PC-9 (cell line): ENCODE measurements at regions of chrX and their contacts with region 1.

Region 1: DNA sequence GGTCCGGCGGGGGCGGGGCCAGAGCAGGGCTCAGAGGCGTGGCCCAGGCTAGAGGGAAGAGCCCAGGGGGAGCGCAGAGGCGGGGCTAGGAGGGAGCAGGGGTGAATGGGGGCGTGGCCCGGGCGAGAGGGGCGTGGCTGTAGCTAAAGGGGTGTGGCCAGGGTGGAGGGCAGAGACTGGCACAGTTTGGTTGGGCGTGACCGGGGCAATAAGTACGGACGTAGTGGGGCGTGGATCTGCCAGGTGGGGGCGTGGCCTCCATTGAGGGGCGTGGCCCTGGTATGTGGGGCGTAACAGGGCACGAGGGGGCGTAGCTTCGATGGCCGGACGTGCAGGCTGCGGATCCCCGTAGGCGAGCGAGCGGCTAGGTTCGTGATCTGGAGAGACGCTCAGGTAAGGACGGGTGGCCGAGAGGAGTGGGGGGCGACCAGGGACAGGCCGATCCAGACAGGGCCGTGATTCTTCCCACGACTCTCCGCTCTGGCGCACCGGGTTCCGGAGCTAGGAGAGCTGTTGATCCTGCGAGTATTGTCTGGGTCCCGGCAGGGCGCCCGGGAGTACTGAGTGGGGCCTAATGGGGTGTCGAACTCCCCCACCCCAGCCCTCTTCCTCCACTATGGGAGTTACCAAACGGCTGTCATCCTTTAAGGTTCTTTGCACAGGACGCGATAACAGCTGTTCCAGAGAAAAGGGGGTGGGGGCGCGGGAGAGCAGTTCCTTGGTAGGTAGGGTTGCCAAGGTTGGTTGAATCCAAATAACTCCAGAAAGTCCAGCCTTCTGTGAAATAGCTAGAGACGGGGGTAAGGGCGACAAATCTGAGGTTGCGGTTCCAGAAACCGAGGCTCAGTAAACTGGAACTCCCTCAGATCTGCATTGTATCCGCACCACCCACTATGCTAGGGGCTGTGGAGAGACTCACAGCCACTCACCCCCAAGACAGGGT is at the start of gene CA5B:
- DNase-seq: peak; percentile 82 to 99
- H3K4me3 ChIP-seq: peak within 1 kb of the TSS; percentile 58
- H3K27ac ChIP-seq: peak within 1 kb of the TSS; percentile 82
- H3K4me1 ChIP-seq: peaks cover 12% of the 10 kb centered on the region
- H3K27me3 ChIP-seq: no peaks in the 10 kb centered on the region
- CTCF ChIP-seq: no peak
- total RNA-seq, gene CA5B: 10.9 and 12.1 TPM in 2 replicates

Region 2: GRCh38 chrX:15335135-15336022 is 402.9 kb before region 1 on chrX and contains the start of gene PIGA:
- CTCF ChIA-PET with region 1: no interaction called
- POLR2A ChIA-PET with region 1: no interaction called
- intact Hi-C with region 1: loop called (anchors 1 kb)
- DNase-seq: peak; percentile 94 to 95
- H3K4me3 ChIP-seq: peak within 1 kb of the TSS; percentile 82
- H3K27ac ChIP-seq: peak within 1 kb of the TSS; percentile 89
- H3K4me1 ChIP-seq: peaks cover 13% of the 10 kb centered on the region
- H3K27me3 ChIP-seq: no peaks in the 10 kb centered on the region
- CTCF ChIP-seq: no peak
- total RNA-seq, gene PIGA: 9.0 and 15.3 TPM in 2 replicates

Region 3: DNA sequence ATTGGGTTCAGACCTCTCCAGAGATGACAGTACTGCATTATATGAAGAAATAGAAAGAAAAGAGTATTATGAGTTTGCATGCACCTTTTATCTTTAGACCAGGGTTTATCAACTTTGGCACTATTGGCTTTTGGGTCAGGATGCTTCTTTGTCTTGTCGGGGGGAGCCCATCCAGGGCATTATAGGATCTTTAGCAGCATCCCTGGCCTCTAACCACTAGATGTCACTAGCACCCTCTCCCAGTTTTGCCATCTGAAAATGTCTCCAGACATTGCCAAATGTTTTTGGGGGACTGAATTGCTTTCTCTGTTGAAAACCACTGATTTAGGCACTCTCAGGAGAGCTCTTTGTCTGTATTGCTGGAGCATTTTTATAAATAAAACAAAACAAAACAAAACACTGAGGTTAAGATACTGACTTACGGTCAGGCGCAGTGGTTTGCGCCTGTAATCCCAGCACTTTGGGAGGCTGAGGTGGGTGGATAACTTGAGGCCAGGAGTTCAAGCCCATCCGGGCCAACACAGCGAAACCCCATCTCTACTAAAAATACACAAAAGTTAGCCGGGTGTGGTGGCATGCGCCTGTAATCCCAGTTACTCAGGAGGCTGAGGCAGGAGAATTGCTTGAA is 23.4 kb after region 1 on chrX:
- CTCF ChIA-PET with region 1: no interaction called
- POLR2A ChIA-PET with region 1: no interaction called
- intact Hi-C with region 1: no loop called
- DNase-seq: peak in 1 of 2 experiments; percentile 7
- H3K4me3 ChIP-seq: no peak overlapping the region
- H3K27ac ChIP-seq: no peak overlapping the region
- H3K4me1 ChIP-seq: no peaks in the 10 kb centered on the region
- H3K27me3 ChIP-seq: no peaks in the 10 kb centered on the region
- CTCF ChIP-seq: peak; percentile 69

Region 4: DNA sequence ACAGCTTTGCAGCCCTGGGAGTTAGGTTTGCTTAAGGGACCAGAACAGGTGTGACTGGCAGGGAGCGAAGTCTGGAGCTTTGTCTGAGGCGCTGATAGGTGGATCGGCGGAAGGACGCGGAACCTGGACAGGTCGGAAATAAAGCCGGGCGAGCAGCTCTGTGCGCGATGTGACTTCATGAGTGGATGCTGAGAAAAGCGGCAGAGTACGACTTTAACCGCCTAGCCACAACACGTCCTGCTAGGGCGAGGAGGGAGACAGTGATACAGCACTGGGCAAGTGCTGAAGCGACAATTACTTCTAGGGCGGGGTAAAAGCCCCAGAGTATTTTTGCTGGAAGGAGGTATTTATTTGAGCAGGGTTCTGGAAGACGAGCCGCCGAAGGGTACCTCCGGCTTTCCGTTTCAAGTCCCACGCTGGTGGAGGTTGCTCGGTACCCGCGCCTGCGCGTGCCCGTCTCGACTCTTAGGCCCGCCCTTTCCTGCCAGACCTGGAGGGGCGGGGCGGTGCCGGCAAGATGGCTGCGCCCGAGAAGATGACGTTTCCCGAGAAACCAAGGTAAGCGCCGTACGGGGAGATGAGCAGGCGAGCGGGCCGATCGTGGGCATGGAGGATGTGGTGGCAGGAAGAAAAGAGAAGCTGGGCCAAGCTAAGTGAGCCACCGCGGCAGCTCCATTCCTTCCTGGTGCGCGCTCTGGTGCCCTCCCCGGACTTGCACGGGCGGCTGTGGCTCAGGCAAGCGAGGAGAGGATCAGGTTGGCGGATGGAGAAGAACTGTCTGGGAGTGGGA is 51.9 kb after region 1 on chrX and contains the start of gene ZRSR2:
- CTCF ChIA-PET with region 1: no interaction called
- POLR2A ChIA-PET with region 1: no interaction called
- intact Hi-C with region 1: loop called (anchors 5 kb)
- DNase-seq: peak; percentile 72 to 80
- H3K4me3 ChIP-seq: peak within 1 kb of the TSS; percentile 83
- H3K27ac ChIP-seq: peak within 1 kb of the TSS; percentile 55
- H3K4me1 ChIP-seq: peaks cover 8% of the 10 kb centered on the region; the same call in 1 of the 2 replicates
- H3K27me3 ChIP-seq: no peaks in the 10 kb centered on the region
- CTCF ChIP-seq: no peak
- total RNA-seq, gene ZRSR2: 7.2 and 7.6 TPM in 2 replicates